ENCODE measurements at regions of chr19 and their contacts with region 1.

Region 1: GRCh38 chr19:7083076-7083956 is 13.8 kb downstream of the ZNF557 start:
- DNase-seq: peak; percentile 34
- ATAC-seq: no peak
- H3K4me3 Mint-ChIP-seq: no peak overlapping the region
- H3K27ac Mint-ChIP-seq: no peak overlapping the region
- H3K4me1 Mint-ChIP-seq: peaks cover 2% of the 10 kb centered on the region
- H3K27me3 Mint-ChIP-seq: no peaks in the 10 kb centered on the region
- CTCF ChIP-seq: no peak

Region 2: GRCh38 chr19:6891761-6892385 is 191.4 kb before region 1 on chr19:
- CTCF ChIA-PET with region 1: no interaction called
- POLR2A ChIA-PET with region 1: no interaction called
- intact Hi-C with region 1: no loop called
- DNase-seq: no peak
- ATAC-seq: no peak
- H3K4me3 Mint-ChIP-seq: peak overlapping the region; percentile 20
- H3K27ac Mint-ChIP-seq: peak overlapping the region; percentile 88
- H3K4me1 Mint-ChIP-seq: peaks cover 58% of the 10 kb centered on the region
- H3K27me3 Mint-ChIP-seq: no peaks in the 10 kb centered on the region
- CTCF ChIP-seq: no peak

Region 3: GRCh38 chr19:7069042-7069903 is 14.0 kb before region 1 on chr19 and contains the start of gene ZNF557:
- CTCF ChIA-PET with region 1: interaction called, 4 read pairs
- POLR2A ChIA-PET with region 1: interaction called, 14 read pairs
- intact Hi-C with region 1: no loop called
- DNase-seq: peak; percentile 100
- ATAC-seq: peak; percentile 98
- H3K4me3 Mint-ChIP-seq: peak within 1 kb of the TSS; percentile 89
- H3K27ac Mint-ChIP-seq: peak within 1 kb of the TSS; percentile 77
- H3K4me1 Mint-ChIP-seq: peaks cover 16% of the 10 kb centered on the region
- H3K27me3 Mint-ChIP-seq: no peaks in the 10 kb centered on the region
- CTCF ChIP-seq: no peak
- total RNA-seq, gene ZNF557: 6.2 to 7.7 TPM